ENCODE measurements at regions of chr6 and their contacts with region 1.

Region 1: GRCh38 chr6:19024737-19025136 is 637.6 kb downstream of the RNF144B start:
- DNase-seq: peak in 1 of 2 experiments; percentile 51
- H3K4me3 ChIP-seq: no peak overlapping the region
- H3K27ac ChIP-seq: no peak overlapping the region
- H3K4me1 ChIP-seq: no peaks in the 10 kb centered on the region
- H3K27me3 ChIP-seq: no peaks in the 10 kb centered on the region
- CTCF ChIP-seq: peak; percentile 29 to 91 (median 76)
- EP300 ChIP-seq: no peak
- POLR2A ChIP-seq: no peak
- RAD21 ChIP-seq: peak; percentile 93 to 95

Region 2: DNA sequence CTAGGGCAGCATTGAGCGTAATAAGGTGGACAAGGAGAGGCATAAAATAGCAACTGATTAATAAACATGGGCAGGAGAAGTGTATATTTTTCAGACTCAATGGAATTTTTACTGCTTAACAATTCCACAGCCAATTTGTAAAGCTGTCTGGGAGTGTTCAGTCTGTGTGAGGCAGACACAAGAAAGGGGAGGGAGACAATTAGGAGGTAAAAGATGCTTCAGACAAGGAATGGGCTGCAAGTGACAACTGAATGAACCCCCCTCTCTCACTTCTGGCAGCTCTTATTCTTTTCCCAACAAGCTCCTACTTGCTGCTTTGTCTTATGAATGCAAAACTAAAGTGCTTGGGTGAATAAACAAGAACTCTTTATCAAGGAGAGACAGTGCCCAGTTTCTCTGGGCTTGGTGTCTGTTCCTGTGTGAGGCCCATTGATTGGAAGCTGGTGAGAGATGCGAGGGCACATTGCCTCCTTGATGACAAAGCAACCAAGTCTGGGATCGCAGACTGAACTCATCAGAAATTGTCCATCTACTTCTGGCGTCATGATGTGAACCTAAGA is 62.3 kb before region 1 on chr6:
- CTCF ChIA-PET with region 1: no interaction called
- POLR2A ChIA-PET with region 1: no interaction called
- DNase-seq: no peak
- H3K4me3 ChIP-seq: no peak overlapping the region
- H3K27ac ChIP-seq: no peak overlapping the region
- H3K4me1 ChIP-seq: no peaks in the 10 kb centered on the region
- H3K27me3 ChIP-seq: no peaks in the 10 kb centered on the region
- CTCF ChIP-seq: no peak
- EP300 ChIP-seq: no peak
- POLR2A ChIP-seq: no peak
- RAD21 ChIP-seq: no peak

Region 3: GRCh38 chr6:18990059-18990978 is 34.4 kb before region 1 on chr6:
- CTCF ChIA-PET with region 1: interaction called, 14 read pairs
- POLR2A ChIA-PET with region 1: no interaction called
- DNase-seq: peak; percentile 69 to 92
- H3K4me3 ChIP-seq: peak overlapping the region in 1 of 4 experiments; percentile 24; a peak in 3 of 8 replicates
- H3K27ac ChIP-seq: no peak overlapping the region
- H3K4me1 ChIP-seq: peaks cover 0 to 4% (median under 1%) of the 10 kb centered on the region in 4 experiments; a peak in 2 of 7 replicates
- H3K27me3 ChIP-seq: no peaks in the 10 kb centered on the region
- CTCF ChIP-seq: peak; percentile 77 to 89 (median 82)
- EP300 ChIP-seq: no peak
- POLR2A ChIP-seq: no peak
- RAD21 ChIP-seq: peak; percentile 75 to 80

Region 4: GRCh38 chr6:19013026-19013705 is 11.6 kb before region 1 on chr6:
- CTCF ChIA-PET with region 1: interaction called, 12 read pairs
- POLR2A ChIA-PET with region 1: no interaction called
- DNase-seq: no peak
- H3K4me3 ChIP-seq: no peak overlapping the region
- H3K27ac ChIP-seq: no peak overlapping the region
- H3K4me1 ChIP-seq: no peaks in the 10 kb centered on the region
- H3K27me3 ChIP-seq: no peaks in the 10 kb centered on the region; a peak in 1 of 7 replicates
- CTCF ChIP-seq: no peak
- EP300 ChIP-seq: no peak
- POLR2A ChIP-seq: no peak
- RAD21 ChIP-seq: no peak

Region 5: DNA sequence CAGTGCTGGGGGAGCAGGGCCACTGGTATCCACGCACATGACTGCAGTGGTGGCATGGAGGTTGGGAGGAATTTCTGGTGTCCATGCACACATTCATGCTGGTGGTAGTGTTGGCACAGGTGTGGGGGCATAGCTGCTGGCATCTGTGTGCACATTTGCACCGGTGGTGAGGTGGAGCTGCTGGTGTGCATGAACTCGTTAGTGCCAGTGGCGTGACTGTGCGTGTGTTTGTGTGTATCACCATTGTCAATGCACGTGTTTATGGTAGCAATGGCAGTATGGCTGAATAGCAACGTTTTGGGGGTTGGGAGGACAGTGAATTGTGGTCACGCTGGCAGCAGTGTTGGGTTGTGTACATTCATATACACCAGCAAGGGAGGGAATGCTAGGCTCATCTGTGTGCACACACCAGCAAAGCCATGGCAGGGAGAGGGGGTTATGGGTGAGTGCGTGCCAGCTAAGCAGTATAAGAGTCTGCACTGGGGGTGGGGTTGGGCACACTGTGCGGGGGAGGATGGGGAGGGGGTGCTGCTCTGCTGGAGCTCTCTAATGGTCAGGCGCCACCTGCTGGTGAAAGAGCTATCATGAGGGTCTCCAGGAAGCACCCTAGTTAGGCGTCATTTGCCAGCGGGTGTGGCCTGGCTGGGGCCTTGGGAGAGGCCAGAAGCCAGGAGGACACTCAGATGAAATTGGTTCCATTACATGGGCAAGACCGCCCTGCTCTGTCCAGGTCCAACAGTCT is 186.3 kb after region 1 on chr6:
- CTCF ChIA-PET with region 1: interaction called, 12 read pairs
- POLR2A ChIA-PET with region 1: no interaction called
- DNase-seq: peak; percentile 15 to 84
- H3K4me3 ChIP-seq: no peak overlapping the region
- H3K27ac ChIP-seq: no peak overlapping the region
- H3K4me1 ChIP-seq: no peaks in the 10 kb centered on the region
- H3K27me3 ChIP-seq: no peaks in the 10 kb centered on the region
- CTCF ChIP-seq: peak; percentile 53 to 66 (median 59)
- EP300 ChIP-seq: no peak
- POLR2A ChIP-seq: no peak
- RAD21 ChIP-seq: peak; percentile 55 to 68